ENCODE measurements at regions of chr1 and their contacts with region 1.

Region 1: GRCh38 chr1:156689035-156689952 is 12.1 kb upstream of the NES start:
- DNase-seq: peak; percentile 87
- CTCF ChIP-seq: peak; percentile 87

Region 2: DNA sequence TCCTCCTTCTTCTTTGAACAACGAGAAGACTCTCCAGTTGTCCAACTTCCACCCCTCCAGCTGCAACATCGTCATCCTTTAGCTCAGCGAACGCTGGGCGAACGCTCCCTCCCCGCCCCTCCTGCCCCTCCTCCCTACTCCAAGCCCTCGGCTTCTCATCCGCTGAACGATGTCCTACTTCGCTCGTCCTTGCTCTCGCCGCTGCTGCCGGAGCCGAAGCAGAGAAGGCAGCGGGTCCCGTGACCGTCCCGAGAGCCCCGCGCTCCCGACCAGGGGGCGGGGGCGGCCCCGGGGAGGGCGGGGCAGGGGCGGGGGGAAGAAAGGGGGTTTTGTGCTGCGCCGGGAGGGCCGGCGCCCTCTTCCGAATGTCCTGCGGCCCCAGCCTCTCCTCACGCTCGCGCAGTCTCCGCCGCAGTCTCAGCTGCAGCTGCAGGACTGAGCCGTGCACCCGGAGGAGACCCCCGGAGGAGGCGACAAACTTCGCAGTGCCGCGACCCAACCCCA is 47.5 kb before region 1 on chr1 and contains the start of gene BCAN:
- CTCF ChIA-PET with region 1: interaction called, 17 read pairs
- POLR2A ChIA-PET with region 1: no interaction called
- DNase-seq: peak; percentile 66
- CTCF ChIP-seq: peak; percentile 8

Region 3: DNA sequence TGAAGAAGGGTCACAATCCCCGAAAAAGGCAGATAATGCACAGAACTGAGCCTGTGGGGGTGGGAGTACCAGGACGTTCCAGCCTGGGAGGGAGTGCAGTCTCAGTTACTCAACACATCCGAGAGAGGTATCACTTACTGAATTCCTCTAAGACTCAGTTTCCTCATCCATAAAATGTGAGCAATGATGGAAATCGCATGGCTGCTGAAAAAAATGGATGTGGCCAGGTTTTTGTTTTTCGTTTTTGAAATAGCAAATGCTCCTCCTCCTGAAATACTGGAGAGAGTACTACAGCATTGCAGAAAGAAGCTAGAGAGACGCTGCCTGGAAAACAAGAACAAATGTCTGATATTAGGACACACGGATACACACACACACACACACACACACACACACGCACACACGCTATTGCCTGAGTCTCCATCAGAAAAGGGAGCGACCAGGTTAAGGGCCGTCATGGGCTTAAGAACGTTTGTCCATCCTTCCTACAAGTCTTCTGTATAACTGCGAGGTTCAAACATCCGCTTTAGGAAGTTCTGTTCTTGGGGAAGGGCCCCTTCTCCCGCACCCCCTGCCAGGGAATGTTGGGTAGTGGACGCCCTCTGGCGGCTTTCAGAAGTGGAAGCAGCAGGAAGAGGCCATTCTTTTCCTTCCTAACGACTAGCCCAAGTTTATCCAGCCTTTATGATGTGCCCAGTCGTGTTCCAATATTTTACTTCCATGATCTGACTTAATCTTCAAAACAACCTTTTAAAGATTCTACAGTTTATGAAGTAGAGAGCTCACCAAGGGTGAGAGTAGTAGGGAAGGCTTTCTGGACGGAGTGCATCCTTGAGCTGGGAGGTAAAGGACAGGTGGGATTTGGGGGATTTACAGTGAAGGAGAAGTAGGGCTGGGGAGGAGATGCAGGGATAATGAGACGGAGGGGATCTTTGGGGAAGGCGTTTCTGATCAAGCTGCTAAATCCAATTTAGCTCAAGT is 11.4 kb before region 1 on chr1:
- CTCF ChIA-PET with region 1: interaction called, 112 read pairs
- POLR2A ChIA-PET with region 1: no interaction called
- DNase-seq: peak; percentile 66
- CTCF ChIP-seq: peak; percentile 83

Region 4: GRCh38 chr1:156705918-156706656 is 16.8 kb after region 1 on chr1:
- CTCF ChIA-PET with region 1: interaction called, 597 read pairs
- POLR2A ChIA-PET with region 1: interaction called, 3 read pairs
- DNase-seq: peak; percentile 88
- CTCF ChIP-seq: peak; percentile 67

Region 5: DNA sequence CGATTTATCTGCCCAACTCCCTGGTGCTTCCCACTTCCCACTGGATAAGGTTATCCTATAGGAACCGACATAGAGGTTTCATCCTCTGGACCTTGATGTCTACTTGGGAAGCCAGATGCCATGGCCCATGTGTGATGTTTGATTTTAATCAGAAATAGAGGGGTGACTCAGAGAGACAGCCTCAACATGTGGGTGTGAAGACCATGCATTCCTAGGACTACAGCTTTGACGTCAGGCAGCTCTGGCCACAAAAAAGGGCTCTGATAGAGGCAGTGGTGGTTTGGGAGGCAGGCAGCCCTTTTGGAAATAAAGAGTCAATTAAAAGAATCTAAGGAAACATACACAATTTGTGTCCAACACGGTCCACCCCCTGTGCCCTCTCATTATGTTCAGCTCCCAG is 132.5 kb after region 1 on chr1:
- CTCF ChIA-PET with region 1: no interaction called
- POLR2A ChIA-PET with region 1: no interaction called
- DNase-seq: no peak
- CTCF ChIP-seq: no peak

Region 6: GRCh38 chr1:156884560-156885184 is 195.4 kb after region 1 on chr1:
- CTCF ChIA-PET with region 1: interaction called, 108 read pairs
- POLR2A ChIA-PET with region 1: no interaction called
- DNase-seq: no peak
- CTCF ChIP-seq: no peak

Measured in GM10248 (cell line).